Activated CD8-positive, alpha-beta T cell treated with anti-CD3 and anti-CD28 coated beads, Interleukin-2, amount 10 ng/mL, durations not matched to agents 7 days and 5 days (primary cell): ENCODE measurements at regions of chr17 and their contacts with region 1.

Region 1: GRCh38 chr17:64491034-64491859 is 5.6 kb downstream of the POLG2 start:
- DNase-seq: peak; percentile 78
- ATAC-seq: peak; percentile 73
- H3K4me3 Mint-ChIP-seq: no peak overlapping the region
- H3K27ac Mint-ChIP-seq: no peak overlapping the region
- H3K4me1 Mint-ChIP-seq: peaks cover 38% of the 10 kb centered on the region
- H3K27me3 Mint-ChIP-seq: no peaks in the 10 kb centered on the region

Region 2: DNA sequence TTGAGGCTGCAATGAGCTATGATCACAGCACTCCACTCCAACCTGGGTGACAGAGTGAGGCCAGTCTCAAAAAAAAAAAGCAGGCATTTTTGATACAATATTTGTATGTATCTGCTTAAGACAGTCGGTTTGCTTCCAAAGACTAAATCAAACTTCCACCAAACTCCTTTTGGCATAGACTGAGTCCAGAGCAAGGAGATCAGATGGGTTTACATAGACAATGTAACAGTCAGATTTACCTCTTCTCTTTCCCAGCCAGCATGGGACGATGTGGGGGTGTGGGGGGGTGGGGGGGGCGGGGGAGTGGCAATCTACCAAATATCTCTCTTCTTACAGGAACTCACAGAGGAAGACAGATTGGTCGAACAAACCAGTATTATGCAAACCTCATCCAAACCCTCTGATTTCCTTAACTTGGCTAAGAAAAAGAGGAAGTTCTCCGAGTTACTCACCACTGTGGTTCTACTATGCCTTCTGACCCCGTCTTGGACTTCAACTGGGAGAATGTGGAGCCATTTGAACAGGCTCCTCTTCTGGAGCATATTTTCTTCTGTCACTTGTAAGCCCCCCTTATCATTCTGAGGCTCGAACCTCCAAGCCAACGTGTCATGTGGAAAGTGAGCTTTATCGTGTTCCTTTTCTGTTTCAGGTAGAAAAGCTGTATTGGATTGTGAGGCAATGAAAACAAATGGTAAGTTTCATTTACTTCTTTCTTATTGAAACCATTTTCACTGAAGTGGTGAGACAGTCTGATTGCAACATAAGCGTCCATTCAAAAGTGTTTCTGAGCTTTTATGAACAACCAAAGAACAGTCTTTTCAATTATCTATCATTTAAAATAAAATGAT is 42.4 kb before region 1 on chr17 and contains the start of gene MILR1:
- CTCF ChIA-PET with region 1: interaction called, 27 read pairs
- POLR2A ChIA-PET with region 1: interaction called, 3 read pairs
- DNase-seq: no peak
- ATAC-seq: peak; percentile 63
- H3K4me3 Mint-ChIP-seq: peak within 1 kb of the TSS; percentile 40
- H3K27ac Mint-ChIP-seq: peak within 1 kb of the TSS; percentile 80
- H3K4me1 Mint-ChIP-seq: peaks cover 36% of the 10 kb centered on the region
- H3K27me3 Mint-ChIP-seq: no peaks in the 10 kb centered on the region
- total RNA-seq, gene MILR1: 1.7 to 2.3 TPM

Region 3: GRCh38 chr17:64459284-64459747 is 31.9 kb before region 1 on chr17:
- CTCF ChIA-PET with region 1: interaction called, 11 read pairs
- POLR2A ChIA-PET with region 1: no interaction called
- DNase-seq: no peak
- ATAC-seq: no peak
- H3K4me3 Mint-ChIP-seq: no peak overlapping the region
- H3K27ac Mint-ChIP-seq: no peak overlapping the region
- H3K4me1 Mint-ChIP-seq: peaks cover 24% of the 10 kb centered on the region
- H3K27me3 Mint-ChIP-seq: no peaks in the 10 kb centered on the region

Region 4: DNA sequence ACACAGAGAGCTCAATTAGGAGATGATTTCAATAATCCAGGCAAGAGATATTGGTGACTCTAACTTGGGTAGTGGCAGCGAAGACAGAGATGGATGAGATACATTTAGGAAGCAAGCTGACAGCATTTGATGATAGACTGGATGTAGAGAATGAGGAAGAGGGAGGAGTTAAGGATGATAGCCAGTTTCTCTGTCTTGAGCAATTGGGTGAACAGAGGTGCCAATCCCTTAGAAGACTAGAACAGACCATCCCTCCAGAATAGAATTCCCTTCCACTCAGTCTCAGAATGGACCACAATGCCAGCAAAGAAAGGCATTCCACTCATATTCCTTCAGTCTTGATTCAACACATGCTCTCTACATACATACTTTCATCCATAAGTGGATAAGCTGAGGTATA is 11.6 kb before region 1 on chr17:
- CTCF ChIA-PET with region 1: interaction called, 48 read pairs
- POLR2A ChIA-PET with region 1: interaction called, 5 read pairs
- DNase-seq: no peak
- ATAC-seq: no peak
- H3K4me3 Mint-ChIP-seq: no peak overlapping the region
- H3K27ac Mint-ChIP-seq: no peak overlapping the region
- H3K4me1 Mint-ChIP-seq: peaks cover 10% of the 10 kb centered on the region
- H3K27me3 Mint-ChIP-seq: no peaks in the 10 kb centered on the region